ENCODE measurements at regions of chr15 and their contacts with region 1.

Region 1: DNA sequence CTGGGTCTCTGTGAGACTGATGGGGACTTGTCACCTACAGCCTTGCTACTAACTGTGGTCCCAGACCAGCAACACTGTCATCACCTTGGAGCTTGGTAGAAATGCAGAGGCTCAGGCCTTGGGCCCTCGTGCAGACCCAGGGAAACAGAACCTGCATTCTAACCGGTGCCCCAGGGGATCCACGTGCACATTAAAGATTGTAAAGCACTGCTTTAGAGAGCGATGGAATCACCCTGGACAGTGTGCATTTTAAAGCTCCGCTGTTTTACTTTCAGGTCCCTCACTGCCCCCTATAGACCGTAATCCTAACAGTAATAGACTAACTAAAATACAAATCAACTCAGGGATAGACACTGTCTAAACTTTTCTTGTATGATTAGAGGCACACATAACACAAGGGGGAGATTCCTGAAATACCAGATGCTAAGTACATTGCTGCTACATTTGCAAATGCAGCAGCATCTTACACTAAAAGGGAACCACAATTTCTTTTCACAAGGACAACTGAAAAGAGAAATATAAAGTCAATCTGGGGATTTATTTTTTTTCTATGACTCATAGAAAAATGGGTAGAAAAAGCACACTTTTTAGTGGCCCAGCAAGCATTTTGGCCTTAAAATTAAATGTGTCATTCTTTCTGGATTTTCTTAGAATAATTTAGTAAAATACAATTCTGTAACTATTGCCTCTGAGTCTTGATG is 10.5 kb upstream of the SH3GL3 start:
- DNase-seq: no peak
- ATAC-seq: no peak
- H3K4me3 ChIP-seq: no peak overlapping the region
- H3K4me3 Mint-ChIP-seq: no peak overlapping the region
- H3K27ac ChIP-seq: no peak overlapping the region
- H3K27ac Mint-ChIP-seq: no peak overlapping the region
- H3K4me1 ChIP-seq: no peaks in the 10 kb centered on the region
- H3K4me1 Mint-ChIP-seq: peaks cover 0 to 6% (median 5%) of the 10 kb centered on the region in 7 donors
- H3K27me3 ChIP-seq: no peaks in the 10 kb centered on the region
- H3K27me3 Mint-ChIP-seq: peaks cover 10 to 30% (median 22%) of the 10 kb centered on the region in 5 donors

Region 2: DNA sequence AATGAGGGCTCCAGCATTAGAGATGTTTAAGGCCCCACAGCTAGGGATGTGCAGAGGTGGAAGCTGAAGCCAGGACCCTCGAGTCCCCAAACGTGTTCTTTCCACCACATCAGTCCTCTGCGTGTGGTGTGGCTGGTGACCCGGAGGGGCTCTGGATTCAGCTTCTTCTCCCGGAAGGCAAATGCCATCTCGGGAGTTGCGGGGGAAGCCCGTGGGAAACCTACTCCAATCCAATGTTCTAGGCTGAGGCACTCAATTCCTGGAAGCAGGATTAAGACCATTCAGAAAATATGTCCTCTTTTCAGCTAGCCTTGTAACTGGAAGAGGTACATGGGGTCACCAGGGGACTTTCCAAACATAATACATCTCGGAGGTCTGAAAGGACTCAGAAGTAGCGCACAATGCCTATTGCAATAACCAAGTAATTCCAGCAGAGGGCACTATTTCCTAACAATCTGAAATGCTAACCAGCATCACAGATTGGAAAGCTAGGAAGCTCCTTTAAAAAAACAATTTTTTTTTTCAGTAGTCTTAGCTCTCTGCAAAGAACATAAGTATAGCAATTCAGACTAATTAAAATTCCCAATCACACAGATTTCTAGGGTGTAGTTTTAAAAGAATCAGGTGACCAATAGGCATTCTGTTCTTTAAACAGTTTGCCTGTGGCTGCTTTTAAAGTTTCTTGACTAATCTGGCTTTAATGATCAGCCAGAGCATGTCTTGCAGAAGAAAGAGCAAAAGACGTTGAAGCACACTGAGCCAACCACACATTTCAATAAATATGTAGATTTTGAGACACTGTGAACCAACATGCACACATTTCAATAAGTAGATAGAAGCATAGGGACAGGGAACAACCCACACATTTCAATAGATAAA is 188.2 kb before region 1 on chr15:
- CTCF ChIA-PET with region 1: no interaction called
- POLR2A ChIA-PET with region 1: no interaction called
- intact Hi-C with region 1: loop called in 1 of 2 experiments (anchors 2 kb)
- DNase-seq: peak in 7 of 9 donors; percentile 2 to 59 (median 38)
- ATAC-seq: peak; percentile 52
- H3K4me3 ChIP-seq: no peak overlapping the region
- H3K4me3 Mint-ChIP-seq: no peak overlapping the region
- H3K27ac ChIP-seq: no peak overlapping the region
- H3K27ac Mint-ChIP-seq: no peak overlapping the region
- H3K4me1 ChIP-seq: no peaks in the 10 kb centered on the region
- H3K4me1 Mint-ChIP-seq: no peaks in the 10 kb centered on the region
- H3K27me3 ChIP-seq: peaks cover 0 to 10% of the 10 kb centered on the region in 2 donors
- H3K27me3 Mint-ChIP-seq: peaks cover 36 to 67% (median 50%) of the 10 kb centered on the region in 5 donors

Region 3: DNA sequence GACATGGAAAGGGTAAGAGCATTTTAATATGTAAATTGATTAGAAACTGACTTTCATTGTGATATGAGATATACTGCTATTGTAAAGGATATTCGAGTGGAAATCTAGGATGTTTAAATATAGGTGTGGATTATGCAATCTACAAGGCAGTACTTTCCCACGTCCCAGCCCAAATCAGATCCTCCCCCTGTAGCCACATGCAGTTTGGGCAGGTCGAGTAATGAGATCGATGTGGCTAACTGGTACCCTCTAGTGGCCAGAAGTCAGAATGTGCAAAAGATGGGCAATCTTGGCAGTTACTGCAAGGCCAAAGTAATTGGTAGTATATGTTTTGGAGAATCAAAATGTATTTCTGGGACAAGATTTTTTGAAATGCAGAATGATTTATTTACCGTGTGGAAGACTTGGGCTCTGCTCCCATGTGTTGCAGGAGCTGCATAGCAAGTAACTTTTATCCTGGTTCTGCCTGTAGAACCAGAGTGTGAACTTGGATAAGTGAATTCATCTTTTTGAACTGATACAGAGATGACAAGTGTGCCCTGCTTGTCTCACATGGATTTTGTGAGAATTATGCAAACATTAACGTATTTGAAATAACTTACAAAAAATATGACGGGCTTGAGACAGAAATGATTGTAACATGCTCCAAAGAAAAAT is 122.8 kb after region 1 on chr15:
- CTCF ChIA-PET with region 1: interaction called, 5 read pairs
- POLR2A ChIA-PET with region 1: no interaction called
- intact Hi-C with region 1: loop called (anchors 1 kb)
- DNase-seq: peak in 8 of 9 donors; percentile 6 to 43 (median 26)
- ATAC-seq: peak; percentile 65
- H3K4me3 ChIP-seq: no peak overlapping the region
- H3K4me3 Mint-ChIP-seq: no peak overlapping the region
- H3K27ac ChIP-seq: no peak overlapping the region
- H3K27ac Mint-ChIP-seq: no peak overlapping the region
- H3K4me1 ChIP-seq: no peaks in the 10 kb centered on the region
- H3K4me1 Mint-ChIP-seq: no peaks in the 10 kb centered on the region
- H3K27me3 ChIP-seq: no peaks in the 10 kb centered on the region
- H3K27me3 Mint-ChIP-seq: peaks cover 3 to 32% (median 18%) of the 10 kb centered on the region in 5 donors

Region 4: GRCh38 chr15:83571820-83572707 is 135.5 kb after region 1 on chr15:
- CTCF ChIA-PET with region 1: no interaction called
- POLR2A ChIA-PET with region 1: no interaction called
- intact Hi-C with region 1: loop called in 1 of 2 experiments (anchors 1 kb)
- DNase-seq: peak in 1 of 9 donors; percentile 2
- ATAC-seq: no peak
- H3K4me3 ChIP-seq: no peak overlapping the region
- H3K4me3 Mint-ChIP-seq: no peak overlapping the region
- H3K27ac ChIP-seq: no peak overlapping the region
- H3K27ac Mint-ChIP-seq: no peak overlapping the region
- H3K4me1 ChIP-seq: no peaks in the 10 kb centered on the region
- H3K4me1 Mint-ChIP-seq: no peaks in the 10 kb centered on the region
- H3K27me3 ChIP-seq: peaks cover 0 to 4% of the 10 kb centered on the region in 2 donors
- H3K27me3 Mint-ChIP-seq: peaks cover 0 to 17% (median 0%) of the 10 kb centered on the region in 5 donors

Region 5: DNA sequence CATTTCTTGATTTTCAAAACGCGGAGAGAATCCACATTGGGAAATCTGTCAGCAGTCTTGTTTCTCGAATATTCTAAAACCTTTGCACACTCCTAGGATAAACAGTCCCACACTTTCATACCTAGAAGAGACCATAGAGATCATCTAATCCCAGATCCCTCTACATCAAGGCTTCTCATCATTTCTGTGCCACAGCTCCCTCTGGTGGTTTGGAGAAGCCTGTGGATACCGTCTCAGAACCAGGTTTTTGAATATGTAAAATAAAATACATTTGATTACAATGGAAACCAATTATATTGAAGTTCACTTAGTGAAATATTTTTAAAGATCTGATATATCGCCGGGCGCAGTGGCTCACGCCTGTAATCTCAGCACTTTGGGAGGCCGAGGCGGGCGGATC is 587.0 kb after region 1 on chr15:
- CTCF ChIA-PET with region 1: no interaction called
- POLR2A ChIA-PET with region 1: no interaction called
- intact Hi-C with region 1: loop called in 1 of 2 experiments (anchors 5 kb)
- DNase-seq: no peak
- ATAC-seq: no peak
- H3K4me3 ChIP-seq: no peak overlapping the region
- H3K4me3 Mint-ChIP-seq: no peak overlapping the region
- H3K27ac ChIP-seq: no peak overlapping the region
- H3K27ac Mint-ChIP-seq: no peak overlapping the region
- H3K4me1 ChIP-seq: no peaks in the 10 kb centered on the region
- H3K4me1 Mint-ChIP-seq: no peaks in the 10 kb centered on the region
- H3K27me3 ChIP-seq: no peaks in the 10 kb centered on the region
- H3K27me3 Mint-ChIP-seq: peaks cover 0 to 33% (median 12%) of the 10 kb centered on the region in 5 donors